ENCODE measurements at regions of chr9 and their contacts with region 1.

Region 1: DNA sequence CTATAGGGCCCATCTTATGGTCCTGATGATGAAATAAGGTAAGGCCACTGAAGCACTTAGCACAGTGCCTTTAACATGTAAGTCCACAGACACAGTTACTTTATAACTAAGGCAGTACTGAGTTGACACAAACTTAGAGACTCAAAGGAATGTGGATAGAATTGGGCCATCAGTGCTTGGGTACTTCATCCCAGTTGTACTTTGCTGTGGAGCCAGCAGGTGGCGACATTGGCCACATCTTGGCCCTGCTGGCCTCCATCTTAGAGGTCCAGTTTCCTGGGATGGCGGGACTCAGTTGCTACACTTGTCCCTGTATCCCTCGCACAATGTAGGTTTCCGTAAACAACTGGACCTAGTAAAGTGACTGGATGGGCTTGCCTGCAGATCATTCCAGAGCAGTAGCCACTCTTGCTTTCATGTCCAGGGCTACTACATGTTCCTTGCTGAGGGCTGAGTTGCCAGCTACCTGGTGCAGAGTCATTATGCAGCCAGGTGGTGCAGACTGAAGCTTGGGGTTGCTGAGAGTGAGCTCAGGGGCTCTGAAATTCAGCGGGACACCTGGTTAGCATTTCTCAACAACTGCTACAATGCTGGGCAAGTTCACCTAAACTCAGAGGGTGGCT is 10.6 kb downstream of the MTAP start:
- DNase-seq: peak; percentile 45 to 83 (median 58)
- ATAC-seq: peak; percentile 75
- H3K4me3 ChIP-seq: no peak overlapping the region
- H3K4me3 Mint-ChIP-seq: no peak overlapping the region
- H3K27ac ChIP-seq: no peak overlapping the region
- H3K27ac Mint-ChIP-seq: peak overlapping the region; percentile 74
- H3K4me1 ChIP-seq: peaks cover 11% of the 10 kb centered on the region
- H3K4me1 Mint-ChIP-seq: peaks cover 19% of the 10 kb centered on the region
- H3K27me3 ChIP-seq: no peaks in the 10 kb centered on the region
- H3K27me3 Mint-ChIP-seq: no peaks in the 10 kb centered on the region
- CTCF ChIP-seq: peak; percentile 84

Region 2: GRCh38 chr9:21802195-21803000 is 10.7 kb before region 1 on chr9 and contains the start of gene MTAP:
- CTCF ChIA-PET with region 1: interaction called, 3 read pairs
- POLR2A ChIA-PET with region 1: interaction called, 8 read pairs
- intact Hi-C with region 1: loop called in 1 of 2 experiments (anchors 1 kb)
- DNase-seq: peak; percentile 35 to 83 (median 57)
- ATAC-seq: peak; percentile 75
- H3K4me3 ChIP-seq: peak within 1 kb of the TSS; percentile 82
- H3K4me3 Mint-ChIP-seq: peak within 1 kb of the TSS; percentile 98
- H3K27ac ChIP-seq: peak within 1 kb of the TSS; percentile 16 to 55
- H3K27ac Mint-ChIP-seq: peak within 1 kb of the TSS; percentile 96
- H3K4me1 ChIP-seq: peaks cover 35% of the 10 kb centered on the region
- H3K4me1 Mint-ChIP-seq: peaks cover 47% of the 10 kb centered on the region
- H3K27me3 ChIP-seq: peaks cover 0 to 5% of the 10 kb centered on the region in 2 experiments
- H3K27me3 Mint-ChIP-seq: peaks cover 12% of the 10 kb centered on the region
- CTCF ChIP-seq: no peak
- total RNA-seq, gene MTAP: 17.2 to 17.8 TPM

Region 3: DNA sequence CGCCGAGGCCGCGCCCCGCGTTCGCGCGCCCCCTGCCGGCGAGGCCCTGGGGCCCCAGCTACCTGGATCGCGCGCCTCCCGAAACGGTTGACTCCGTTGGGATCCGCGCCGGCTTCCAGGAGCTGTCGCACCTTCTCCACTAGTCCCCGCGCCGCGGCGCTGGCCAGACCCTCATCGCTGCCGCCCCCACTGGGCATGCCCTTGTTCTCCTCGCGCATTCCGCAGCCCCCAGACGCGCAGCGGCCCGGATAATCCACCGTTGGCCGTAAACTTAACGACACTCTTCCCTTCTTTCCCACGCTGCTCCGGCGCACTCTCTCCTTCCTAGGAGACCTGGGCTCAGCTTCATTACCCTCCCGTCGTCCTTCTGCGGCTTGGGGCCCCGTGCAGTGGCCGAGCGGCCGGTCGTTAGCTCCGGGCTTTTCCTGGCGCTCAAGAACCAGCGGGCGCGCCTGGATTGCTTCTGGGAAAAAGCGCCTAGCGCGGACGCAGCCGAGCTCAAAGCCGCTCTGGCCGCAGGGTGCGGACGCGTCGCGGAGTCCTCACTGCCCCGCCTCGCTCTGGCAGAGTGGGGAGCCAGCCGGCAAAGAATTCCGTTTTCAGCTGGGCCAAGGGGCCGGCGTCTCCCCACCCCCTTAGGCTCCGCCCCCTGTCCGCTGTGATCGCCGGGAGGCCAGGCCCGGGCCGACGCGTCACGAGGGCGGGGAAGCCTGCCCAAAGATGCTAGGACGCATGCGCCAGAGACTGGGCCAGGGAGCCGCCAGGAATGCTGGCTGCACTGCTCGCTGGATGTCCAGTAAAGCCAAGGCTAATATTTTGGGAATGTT is 195.9 kb after region 1 on chr9 and contains the start of gene CDKN2B:
- CTCF ChIA-PET with region 1: interaction called, 37 read pairs
- POLR2A ChIA-PET with region 1: interaction called, 6 read pairs
- intact Hi-C with region 1: loop called (anchors 1 kb)
- DNase-seq: peak in 13 of 14 experiments; percentile 37 to 86 (median 54)
- ATAC-seq: peak; percentile 67
- H3K4me3 ChIP-seq: peak within 1 kb of the TSS; percentile 60
- H3K4me3 Mint-ChIP-seq: peak within 1 kb of the TSS; percentile 68
- H3K27ac ChIP-seq: no peak within 1 kb of the TSS
- H3K27ac Mint-ChIP-seq: no peak within 1 kb of the TSS
- H3K4me1 ChIP-seq: peaks cover 25% of the 10 kb centered on the region
- H3K4me1 Mint-ChIP-seq: peaks cover 23% of the 10 kb centered on the region
- H3K27me3 ChIP-seq: peaks cover 41 to 72% of the 10 kb centered on the region in 2 experiments
- H3K27me3 Mint-ChIP-seq: peaks cover 89% of the 10 kb centered on the region
- CTCF ChIP-seq: peak; percentile 86
- total RNA-seq, gene CDKN2B: not detected

Region 4: GRCh38 chr9:22037954-22038690 is 225.1 kb after region 1 on chr9:
- CTCF ChIA-PET with region 1: interaction called, 28 read pairs
- POLR2A ChIA-PET with region 1: interaction called, 9 read pairs
- intact Hi-C with region 1: loop called (anchors 1 kb)
- DNase-seq: peak in 3 of 14 experiments; percentile 48 to 54 (median 51)
- ATAC-seq: peak; percentile 49
- H3K4me3 ChIP-seq: no peak overlapping the region
- H3K4me3 Mint-ChIP-seq: no peak overlapping the region
- H3K27ac ChIP-seq: no peak overlapping the region
- H3K27ac Mint-ChIP-seq: no peak overlapping the region
- H3K4me1 ChIP-seq: no peaks in the 10 kb centered on the region
- H3K4me1 Mint-ChIP-seq: no peaks in the 10 kb centered on the region
- H3K27me3 ChIP-seq: no peaks in the 10 kb centered on the region
- H3K27me3 Mint-ChIP-seq: no peaks in the 10 kb centered on the region
- CTCF ChIP-seq: peak; percentile 72

Region 5: GRCh38 chr9:22119537-22120158 is 306.6 kb after region 1 on chr9:
- CTCF ChIA-PET with region 1: interaction called, 11 read pairs
- POLR2A ChIA-PET with region 1: no interaction called
- intact Hi-C with region 1: loop called (anchors 2 to 5 kb)
- DNase-seq: peak in 3 of 14 experiments; percentile 38 to 56 (median 47)
- ATAC-seq: no peak
- H3K4me3 ChIP-seq: no peak overlapping the region
- H3K4me3 Mint-ChIP-seq: no peak overlapping the region
- H3K27ac ChIP-seq: no peak overlapping the region
- H3K27ac Mint-ChIP-seq: no peak overlapping the region
- H3K4me1 ChIP-seq: no peaks in the 10 kb centered on the region
- H3K4me1 Mint-ChIP-seq: no peaks in the 10 kb centered on the region
- H3K27me3 ChIP-seq: no peaks in the 10 kb centered on the region
- H3K27me3 Mint-ChIP-seq: peaks cover 13% of the 10 kb centered on the region
- CTCF ChIP-seq: no peak

Region 6: DNA sequence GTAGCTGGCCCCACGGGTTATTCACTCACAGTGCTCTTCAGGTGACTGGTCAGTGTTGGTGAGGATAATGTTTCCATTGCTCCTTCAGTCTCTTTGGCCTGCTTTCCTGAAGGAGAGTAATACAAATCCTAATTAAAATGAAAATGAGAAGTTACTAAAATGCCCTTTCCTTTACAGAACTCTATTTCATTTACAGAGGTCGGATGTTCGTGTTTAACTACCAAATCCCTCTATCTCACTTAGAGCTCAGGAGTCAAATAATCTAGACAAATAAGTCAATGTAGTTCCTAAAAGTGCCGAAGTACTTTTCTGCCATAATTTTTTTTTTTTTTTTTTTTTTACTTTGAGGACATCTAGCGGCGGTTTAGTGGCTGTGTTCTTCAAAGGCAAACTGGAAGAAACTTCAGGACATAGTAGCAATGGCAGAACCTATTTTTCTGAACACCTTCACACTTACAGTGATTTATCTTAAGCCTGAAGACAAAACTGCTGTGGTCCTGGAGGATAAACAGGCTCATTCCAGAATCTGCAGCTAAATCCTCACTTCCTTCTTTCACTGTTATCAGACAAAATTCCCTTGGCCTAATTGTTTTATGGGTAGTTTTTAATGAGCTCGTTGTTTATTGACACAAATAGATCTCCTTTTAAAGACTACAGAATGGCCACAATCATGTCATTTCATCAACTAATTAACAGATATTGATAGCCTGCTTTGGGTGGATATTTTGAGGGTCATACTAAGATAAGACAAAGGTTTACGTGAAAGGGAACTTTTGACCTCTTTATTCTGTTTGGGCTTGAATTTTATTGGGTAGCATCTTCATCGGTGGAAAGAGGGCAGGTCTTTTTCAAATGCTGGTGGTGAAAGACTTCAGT is 426.0 kb after region 1 on chr9:
- CTCF ChIA-PET with region 1: interaction called, 4 read pairs
- POLR2A ChIA-PET with region 1: no interaction called
- intact Hi-C with region 1: loop called (anchors 5 kb)
- DNase-seq: peak in 3 of 14 experiments; percentile 28 to 31 (median 28)
- ATAC-seq: no peak
- H3K4me3 ChIP-seq: no peak overlapping the region
- H3K4me3 Mint-ChIP-seq: no peak overlapping the region
- H3K27ac ChIP-seq: no peak overlapping the region
- H3K27ac Mint-ChIP-seq: no peak overlapping the region
- H3K4me1 ChIP-seq: no peaks in the 10 kb centered on the region
- H3K4me1 Mint-ChIP-seq: peaks cover 11% of the 10 kb centered on the region
- H3K27me3 ChIP-seq: no peaks in the 10 kb centered on the region
- H3K27me3 Mint-ChIP-seq: no peaks in the 10 kb centered on the region
- CTCF ChIP-seq: peak; percentile 23

Region 7: DNA sequence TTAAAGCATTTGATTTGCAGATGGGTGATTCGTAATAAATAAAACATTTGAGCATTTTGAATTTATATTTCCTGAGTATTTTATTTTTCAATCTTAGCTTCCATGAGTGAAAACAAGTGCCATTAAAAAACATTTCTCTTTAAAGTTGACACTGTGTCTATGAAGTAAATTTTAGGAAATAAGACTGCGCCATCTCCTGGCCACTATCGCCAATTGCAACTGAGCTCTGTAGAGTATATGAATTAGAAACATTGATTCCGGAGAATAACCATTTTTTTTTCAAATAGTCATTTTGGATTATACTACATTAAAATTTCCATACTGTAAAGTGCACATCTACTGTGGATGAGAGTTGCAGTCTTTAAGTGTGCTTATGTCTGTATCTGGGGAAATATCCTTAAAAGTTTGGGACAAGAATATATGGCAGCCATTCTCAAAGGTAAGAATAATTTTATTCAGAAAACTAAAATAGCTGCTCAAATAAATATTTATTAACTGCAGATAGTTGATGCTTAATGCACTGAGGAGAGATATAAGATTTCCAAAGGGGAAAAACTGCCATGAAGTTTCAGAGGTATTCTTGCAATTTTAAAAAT is 639.5 kb after region 1 on chr9:
- CTCF ChIA-PET with region 1: interaction called, 17 read pairs
- POLR2A ChIA-PET with region 1: interaction called, 4 read pairs
- intact Hi-C with region 1: loop called (anchors 1 to 2 kb)
- DNase-seq: peak in 13 of 14 experiments; percentile 10 to 62 (median 20)
- ATAC-seq: peak; percentile 44
- H3K4me3 ChIP-seq: no peak overlapping the region
- H3K4me3 Mint-ChIP-seq: no peak overlapping the region
- H3K27ac ChIP-seq: no peak overlapping the region
- H3K27ac Mint-ChIP-seq: no peak overlapping the region
- H3K4me1 ChIP-seq: peaks cover 3% of the 10 kb centered on the region
- H3K4me1 Mint-ChIP-seq: no peaks in the 10 kb centered on the region
- H3K27me3 ChIP-seq: peaks cover 7 to 31% of the 10 kb centered on the region in 2 experiments
- H3K27me3 Mint-ChIP-seq: peaks cover 56% of the 10 kb centered on the region
- CTCF ChIP-seq: peak; percentile 80